Left cardiac atrium (tissue), 4 donors: ENCODE measurements at regions of chr1 and their contacts with region 1.

Region 1: GRCh38 chr1:100152271-100152670 is 19.3 kb downstream of the TRMT13 start:
- DNase-seq: no peak
- ATAC-seq: no peak

Region 2: GRCh38 chr1:99886841-99887240 is 265.4 kb before region 1 on chr1:
- intact Hi-C with region 1: loop called in 1 of 2 experiments (anchors 10 kb)
- DNase-seq: no peak
- ATAC-seq: no peak

Region 3: DNA sequence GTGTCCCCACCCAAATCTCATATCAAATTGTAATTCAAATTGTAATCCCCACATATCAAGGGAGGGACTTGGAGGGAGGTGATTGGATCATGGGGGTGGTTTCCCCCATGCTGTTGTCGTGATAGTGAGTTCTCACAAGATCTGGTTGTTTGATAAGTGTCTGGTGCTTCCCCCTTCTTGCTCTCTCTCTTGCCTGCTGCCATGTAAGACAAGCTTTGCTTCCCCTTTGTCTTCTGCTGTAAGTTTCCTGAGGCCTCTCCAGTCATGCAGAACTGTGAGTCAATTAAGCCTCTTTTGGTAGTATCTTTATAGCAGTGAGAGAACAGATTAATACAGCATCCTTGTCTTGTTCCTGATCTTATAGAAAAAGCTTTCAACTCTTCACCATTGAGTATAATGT is 32.3 kb after region 1 on chr1:
- intact Hi-C with region 1: no loop called
- DNase-seq: no peak
- ATAC-seq: no peak

Region 4: DNA sequence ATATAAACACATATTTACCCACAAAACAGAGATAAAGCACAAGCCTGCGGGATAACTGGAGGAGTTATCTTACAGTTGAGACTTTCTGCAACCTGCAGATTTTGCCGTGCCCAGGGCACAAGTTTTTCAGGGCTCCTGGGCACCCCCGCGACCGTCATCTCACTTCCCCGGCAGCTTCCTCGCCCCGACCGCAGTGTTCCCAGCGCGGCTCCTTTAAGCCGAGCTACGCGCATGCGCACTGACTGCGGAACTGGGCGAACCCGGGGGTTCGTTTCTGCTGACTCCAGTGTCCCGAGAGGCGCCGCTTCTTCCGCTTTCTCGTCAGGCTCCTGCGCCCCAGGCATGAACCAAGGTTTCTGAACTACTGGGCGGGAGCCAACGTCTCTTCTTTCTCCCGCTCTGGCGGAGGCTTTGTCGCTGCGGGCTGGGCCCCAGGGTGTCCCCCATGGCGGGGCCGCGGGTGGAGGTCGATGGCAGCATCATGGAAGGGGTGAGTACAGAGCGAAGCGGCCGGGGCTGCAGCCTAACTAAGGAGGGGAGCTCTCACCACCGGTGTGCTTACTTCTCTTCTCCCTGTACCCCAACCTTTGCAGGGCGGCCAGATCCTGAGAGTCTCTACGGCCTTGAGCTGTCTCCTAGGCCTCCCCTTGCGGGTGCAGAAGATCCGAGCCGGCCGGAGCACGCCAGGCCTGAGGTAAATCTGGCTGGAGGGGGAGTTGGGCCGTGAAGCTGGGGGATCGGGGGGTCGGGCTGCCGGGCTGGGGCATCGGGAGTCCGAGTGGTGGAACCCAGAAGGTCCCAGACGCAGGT is 113.9 kb after region 1 on chr1 and contains the start of gene RTCA:
- intact Hi-C with region 1: loop called in 1 of 2 experiments (anchors 10 kb)
- DNase-seq: peak; percentile 98
- ATAC-seq: peak; percentile 99 to 100
- total RNA-seq, gene RTCA: 30.3 to 31.8 TPM

Region 5: GRCh38 chr1:100343897-100344296 is 191.6 kb after region 1 on chr1:
- intact Hi-C with region 1: no loop called
- DNase-seq: no peak
- ATAC-seq: peak in 1 of 2 donors; percentile 19